ENCODE measurements at regions of chr4 and their contacts with region 1.

Region 1: DNA sequence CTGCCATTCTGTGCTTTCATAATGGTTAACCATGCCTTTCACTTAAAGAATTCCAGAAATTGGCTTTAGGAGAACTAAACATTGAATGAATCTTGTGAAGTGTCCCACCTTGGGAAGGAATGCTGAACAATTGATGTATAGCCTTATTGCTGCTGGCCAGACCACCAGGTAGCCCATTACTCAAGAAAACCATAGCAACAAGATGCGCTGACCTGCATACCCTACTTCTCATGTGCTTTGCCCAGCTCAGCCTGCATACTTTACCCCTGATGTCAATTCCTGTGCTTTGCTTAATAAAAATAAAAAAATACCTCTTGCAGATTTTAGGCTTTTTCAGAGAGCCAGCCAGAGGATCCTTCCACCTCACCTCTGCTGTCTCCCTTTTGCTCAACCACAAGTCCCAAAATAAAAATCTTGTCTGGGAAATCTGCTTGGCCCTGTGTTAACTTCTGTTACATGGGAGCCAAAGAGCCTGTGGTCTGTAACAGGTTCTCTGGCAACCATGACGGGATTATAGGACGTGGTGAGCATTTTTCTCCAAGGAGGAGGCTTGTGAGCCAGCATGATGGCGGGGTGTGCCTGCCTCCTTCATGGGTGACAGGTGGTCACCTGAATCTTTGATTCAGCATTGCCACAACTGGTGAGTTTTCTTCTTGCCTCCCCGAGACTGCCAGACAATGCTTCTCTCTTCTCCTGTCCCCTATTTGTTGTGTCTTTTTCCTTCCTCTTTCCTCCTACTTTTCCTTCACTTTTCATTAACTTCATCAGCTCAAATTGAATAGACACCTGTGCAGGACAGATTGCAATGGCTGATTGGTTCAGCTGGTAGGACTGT is 106.8 kb downstream of the ARSJ start:
- DNase-seq: no peak
- CTCF ChIP-seq: no peak

Region 2: DNA sequence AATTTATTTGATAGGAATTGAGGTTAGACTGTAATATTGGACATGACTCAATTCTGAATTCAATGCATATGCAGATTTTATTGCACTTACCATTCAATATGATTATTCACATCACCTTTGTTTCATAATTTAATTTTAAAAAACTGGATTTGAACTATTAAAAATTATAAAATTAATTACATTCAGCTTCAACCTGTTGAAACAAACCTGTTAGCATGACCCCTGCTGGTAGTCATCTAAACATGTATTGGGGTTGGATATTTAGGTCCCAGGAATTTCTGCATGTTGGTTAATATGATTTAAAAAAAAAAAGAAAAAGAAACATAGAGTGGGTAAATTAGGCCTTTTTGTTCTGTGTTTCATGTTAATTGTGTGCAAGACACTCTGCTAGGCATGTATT is 20.9 kb after region 1 on chr4:
- CTCF ChIA-PET with region 1: interaction called, 14 read pairs
- POLR2A ChIA-PET with region 1: no interaction called
- DNase-seq: no peak
- CTCF ChIP-seq: peak; percentile 19